Aorta (tissue), 5 donors: ENCODE measurements at regions of chr2 and their contacts with region 1.

Region 1: DNA sequence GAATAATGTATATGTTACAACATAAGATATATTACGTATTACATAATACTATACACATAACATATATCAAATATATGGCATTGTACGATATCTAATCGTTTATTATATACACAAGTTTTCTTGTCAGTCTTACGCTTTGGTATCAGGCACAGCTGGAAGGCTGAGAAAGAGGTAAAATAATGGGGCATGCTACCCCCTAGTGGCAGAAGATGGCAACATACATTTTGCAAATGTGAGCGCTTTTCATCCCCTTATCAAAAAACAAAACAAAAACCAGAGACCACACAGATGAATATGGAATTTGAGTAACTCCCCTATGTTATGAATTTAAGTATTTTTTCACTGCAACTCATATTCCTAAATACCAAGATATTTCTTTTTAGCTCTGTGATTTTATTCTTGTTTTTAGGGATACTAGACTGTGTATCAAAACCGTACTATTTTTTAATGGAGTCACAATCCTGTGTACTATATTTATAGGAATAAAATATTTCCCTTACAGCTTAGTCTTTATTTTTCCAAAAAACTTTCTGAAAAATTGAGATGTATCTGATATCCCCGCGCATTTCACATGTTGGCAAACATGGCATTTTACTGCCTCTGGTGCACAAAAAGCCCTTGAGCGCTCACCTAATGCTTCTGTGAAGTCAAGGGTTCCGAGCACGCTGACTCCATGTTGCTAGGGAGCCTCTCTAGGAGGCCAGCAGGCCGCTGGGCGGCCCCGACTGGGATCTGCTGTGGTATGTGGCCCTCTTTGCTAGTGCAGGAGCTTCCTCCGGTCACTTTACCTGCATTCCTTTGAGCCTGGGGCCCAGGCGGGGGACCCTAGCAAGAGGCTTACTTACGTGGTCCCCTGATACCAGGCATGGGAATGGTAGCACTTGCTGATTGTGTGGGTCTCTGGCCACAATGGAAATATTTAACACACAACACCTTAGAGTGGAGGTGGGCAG is 62.5 kb downstream of the SLC4A3 start:
- DNase-seq: no peak
- ATAC-seq: peak; percentile 79
- H3K4me3 ChIP-seq: no peak overlapping the region
- H3K27ac ChIP-seq: no peak overlapping the region
- H3K4me1 ChIP-seq: no peaks in the 10 kb centered on the region
- H3K27me3 ChIP-seq: no peaks in the 10 kb centered on the region

Region 2: DNA sequence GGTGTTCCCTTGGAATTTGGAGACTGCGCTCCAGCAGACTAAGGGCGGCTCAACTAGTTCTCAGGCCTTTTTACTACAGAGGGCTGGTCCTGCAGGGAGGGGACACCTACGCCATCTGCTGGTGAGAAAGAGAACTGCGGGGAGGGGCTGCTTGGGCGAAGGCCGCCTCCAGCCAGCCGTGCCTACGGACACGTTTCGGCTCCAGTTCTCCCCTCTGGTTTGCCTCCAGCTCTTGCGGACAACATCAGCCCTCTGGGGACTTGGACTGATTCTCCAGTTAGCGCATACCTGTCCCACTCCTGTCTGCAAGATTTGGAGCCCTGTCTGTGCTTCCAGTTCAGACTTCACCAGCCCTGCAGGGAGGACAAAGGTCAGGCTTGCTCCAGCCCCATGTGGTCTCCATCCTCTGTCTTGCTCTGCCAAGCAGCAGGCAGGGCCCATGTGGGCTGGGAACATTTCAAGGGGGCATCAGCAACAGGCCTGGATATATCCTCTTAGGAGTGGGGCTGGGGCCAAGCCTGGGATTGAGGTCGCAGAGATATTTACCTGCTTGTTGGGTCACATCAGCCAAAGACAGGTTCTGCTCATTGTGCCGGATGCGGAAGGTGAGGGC is 391.1 kb before region 1 on chr2:
- intact Hi-C with region 1: no loop called
- DNase-seq: peak; percentile 90 to 96
- ATAC-seq: peak; percentile 86
- H3K4me3 ChIP-seq: no peak overlapping the region
- H3K27ac ChIP-seq: no peak overlapping the region
- H3K4me1 ChIP-seq: no peaks in the 10 kb centered on the region
- H3K27me3 ChIP-seq: no peaks in the 10 kb centered on the region

Region 3: GRCh38 chr2:219402665-219403515 is 287.1 kb before region 1 on chr2:
- intact Hi-C with region 1: loop called in 1 of 2 experiments (anchors 10 kb)
- DNase-seq: peak; percentile 78 to 79
- ATAC-seq: peak; percentile 76
- H3K4me3 ChIP-seq: no peak overlapping the region
- H3K27ac ChIP-seq: no peak overlapping the region
- H3K4me1 ChIP-seq: peaks cover 0 to 2% of the 10 kb centered on the region in 2 donors
- H3K27me3 ChIP-seq: no peaks in the 10 kb centered on the region

Region 4: GRCh38 chr2:219543601-219544358 is 146.2 kb before region 1 on chr2 and contains the starts of genes CHPF and TMEM198:
- intact Hi-C with region 1: loop called (anchors 2 kb)
- DNase-seq: peak; percentile 99
- ATAC-seq: peak; percentile 95
- H3K4me3 ChIP-seq: peak within 1 kb of the TSS; percentile 41 to 68
- H3K27ac ChIP-seq: peak within 1 kb of the TSS; percentile 8 to 82
- H3K4me1 ChIP-seq: no peaks in the 10 kb centered on the region
- H3K27me3 ChIP-seq: no peaks in the 10 kb centered on the region
- total RNA-seq, gene CHPF: 75.7 to 81.2 TPM
- total RNA-seq, gene TMEM198: 1.7 to 2.3 TPM

Region 5: GRCh38 chr2:219571311-219572236 is 118.4 kb before region 1 on chr2 and contains the start of gene OBSL1:
- intact Hi-C with region 1: loop called in 1 of 2 experiments (anchors 2 kb)
- DNase-seq: peak; percentile 82 to 89
- ATAC-seq: peak; percentile 79
- H3K4me3 ChIP-seq: peak within 1 kb of the TSS; percentile 79 to 91
- H3K27ac ChIP-seq: peak within 1 kb of the TSS; percentile 47 to 76
- H3K4me1 ChIP-seq: no peaks in the 10 kb centered on the region
- H3K27me3 ChIP-seq: no peaks in the 10 kb centered on the region
- total RNA-seq, gene OBSL1: 65.3 to 76.7 TPM

Region 6: DNA sequence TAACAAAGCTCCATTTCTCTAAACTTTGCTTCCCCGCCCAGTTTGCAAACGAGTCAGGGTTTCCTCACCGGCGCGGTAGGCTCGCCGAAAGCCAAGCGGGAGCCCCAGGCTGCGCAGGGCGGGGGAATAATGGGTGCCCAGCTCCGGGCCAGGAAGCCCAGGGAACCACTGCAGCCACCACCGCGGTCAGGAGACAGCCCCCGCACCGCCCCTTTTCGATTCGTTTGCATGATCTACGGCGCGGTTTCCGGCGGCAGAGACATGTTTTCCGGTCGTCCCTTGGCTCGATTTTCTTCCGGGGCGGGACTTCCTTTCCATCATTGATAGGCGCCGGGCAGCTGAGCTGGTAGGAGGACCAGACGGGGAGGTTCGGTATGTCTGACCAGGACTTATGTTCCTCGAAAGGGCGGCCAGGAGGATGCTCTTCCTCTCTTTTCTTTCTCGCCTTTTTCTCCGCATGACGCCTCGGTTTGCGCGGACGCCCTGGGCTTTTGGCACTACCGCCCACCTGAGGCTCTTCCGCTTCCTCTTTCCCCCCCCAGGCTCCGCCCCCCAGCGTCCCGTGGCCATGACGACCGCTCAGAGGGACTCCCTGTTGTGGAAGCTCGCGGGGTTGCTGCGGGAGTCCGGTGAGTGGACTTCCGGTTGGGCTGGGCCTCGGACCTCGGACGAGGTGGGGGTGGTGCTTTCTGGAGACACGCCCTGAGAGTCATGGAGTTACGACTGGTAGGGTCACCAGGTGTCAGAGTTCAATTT is 92.2 kb before region 1 on chr2 and contains the start of gene STK11IP:
- intact Hi-C with region 1: loop called in 1 of 2 experiments (anchors 1 kb)
- DNase-seq: peak; percentile 98
- ATAC-seq: peak; percentile 97
- H3K4me3 ChIP-seq: peak within 1 kb of the TSS; percentile 59 to 72
- H3K27ac ChIP-seq: peak within 1 kb of the TSS; percentile 73 to 80
- H3K4me1 ChIP-seq: peaks cover 0 to 3% of the 10 kb centered on the region in 2 donors
- H3K27me3 ChIP-seq: no peaks in the 10 kb centered on the region
- total RNA-seq, gene STK11IP: 18.5 to 29.9 TPM

Region 7: GRCh38 chr2:219612577-219613286 is 77.2 kb before region 1 on chr2:
- intact Hi-C with region 1: no loop called
- DNase-seq: peak in 1 of 2 donors; percentile 34
- ATAC-seq: no peak
- H3K4me3 ChIP-seq: no peak overlapping the region
- H3K27ac ChIP-seq: no peak overlapping the region
- H3K4me1 ChIP-seq: no peaks in the 10 kb centered on the region
- H3K27me3 ChIP-seq: no peaks in the 10 kb centered on the region

Region 8: GRCh38 chr2:219642465-219643080 is 47.4 kb before region 1 on chr2:
- intact Hi-C with region 1: loop called (anchors 2 to 5 kb)
- DNase-seq: peak; percentile 97 to 99
- ATAC-seq: peak; percentile 95
- H3K4me3 ChIP-seq: no peak overlapping the region
- H3K27ac ChIP-seq: no peak overlapping the region
- H3K4me1 ChIP-seq: no peaks in the 10 kb centered on the region
- H3K27me3 ChIP-seq: no peaks in the 10 kb centered on the region

Region 9: GRCh38 chr2:219765231-219765911 is 75.4 kb after region 1 on chr2:
- intact Hi-C with region 1: no loop called
- DNase-seq: no peak
- ATAC-seq: no peak
- H3K4me3 ChIP-seq: no peak overlapping the region
- H3K27ac ChIP-seq: no peak overlapping the region
- H3K4me1 ChIP-seq: peaks cover 0 to 2% of the 10 kb centered on the region in 2 donors
- H3K27me3 ChIP-seq: no peaks in the 10 kb centered on the region